ENCODE measurements at regions of chr2 and their contacts with region 1.

Region 1: GRCh38 chr2:192162392-192163042 is 32.2 kb downstream of the TMEFF2 start:
- DNase-seq: no peak
- H3K4me3 ChIP-seq: peak overlapping the region in 1 of 8 donors; percentile 32
- H3K27ac ChIP-seq: no peak overlapping the region
- H3K4me1 ChIP-seq: peaks cover 6 to 15% (median 11%) of the 10 kb centered on the region in 6 donors
- H3K27me3 ChIP-seq: no peaks in the 10 kb centered on the region
- CTCF ChIP-seq: peak; percentile 60 to 93 (median 85)
- POLR2A ChIP-seq: no peak

Region 2: DNA sequence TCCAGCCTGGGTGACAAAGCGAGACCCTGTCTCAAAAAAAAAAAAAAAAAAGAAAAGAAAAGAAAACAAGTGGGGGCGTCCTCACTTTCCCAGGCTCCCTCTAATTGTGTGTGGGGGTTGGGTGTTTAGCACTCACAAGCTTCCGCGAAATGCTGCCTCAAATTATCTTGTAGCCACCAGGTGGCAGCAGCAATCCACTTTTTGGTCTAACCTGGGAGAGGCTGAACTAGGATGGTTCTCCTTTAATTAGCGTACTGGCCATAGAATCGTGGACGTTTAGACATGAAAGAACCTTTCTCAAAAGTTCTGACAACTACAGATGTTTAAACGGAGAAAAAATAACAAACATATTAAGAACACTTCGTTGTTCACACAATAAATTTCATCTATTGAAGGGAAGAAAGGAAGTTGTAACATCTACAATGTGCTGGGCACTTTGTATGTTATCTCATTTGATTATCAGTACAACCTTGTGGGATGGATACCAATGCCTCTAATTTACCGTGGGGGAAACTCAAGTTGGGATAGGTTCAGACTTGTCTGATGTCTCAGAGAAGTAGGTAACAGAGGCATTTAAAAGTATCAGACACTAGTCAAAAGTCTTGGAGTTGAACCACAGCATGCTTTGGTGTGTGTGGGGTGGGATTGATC is 607.3 kb before region 1 on chr2:
- intact Hi-C with region 1: loop called (anchors 5 kb)
- DNase-seq: peak; percentile 87
- H3K4me3 ChIP-seq: peak overlapping the region in 1 of 8 donors; percentile 15
- H3K27ac ChIP-seq: no peak overlapping the region
- H3K4me1 ChIP-seq: peaks cover 0 to 9% (median 4%) of the 10 kb centered on the region in 6 donors
- H3K27me3 ChIP-seq: no peaks in the 10 kb centered on the region
- CTCF ChIP-seq: peak; percentile 57 to 85 (median 75)
- POLR2A ChIP-seq: no peak

Region 3: GRCh38 chr2:191811807-191812602 is 350.5 kb before region 1 on chr2:
- intact Hi-C with region 1: loop called (anchors 5 kb)
- DNase-seq: no peak
- H3K4me3 ChIP-seq: peak overlapping the region in 1 of 8 donors; percentile 17
- H3K27ac ChIP-seq: no peak overlapping the region
- H3K4me1 ChIP-seq: peaks cover 0 to 6% (median 0%) of the 10 kb centered on the region in 6 donors
- H3K27me3 ChIP-seq: no peaks in the 10 kb centered on the region
- CTCF ChIP-seq: peak; percentile 38 to 78 (median 60)
- POLR2A ChIP-seq: no peak

Region 4: DNA sequence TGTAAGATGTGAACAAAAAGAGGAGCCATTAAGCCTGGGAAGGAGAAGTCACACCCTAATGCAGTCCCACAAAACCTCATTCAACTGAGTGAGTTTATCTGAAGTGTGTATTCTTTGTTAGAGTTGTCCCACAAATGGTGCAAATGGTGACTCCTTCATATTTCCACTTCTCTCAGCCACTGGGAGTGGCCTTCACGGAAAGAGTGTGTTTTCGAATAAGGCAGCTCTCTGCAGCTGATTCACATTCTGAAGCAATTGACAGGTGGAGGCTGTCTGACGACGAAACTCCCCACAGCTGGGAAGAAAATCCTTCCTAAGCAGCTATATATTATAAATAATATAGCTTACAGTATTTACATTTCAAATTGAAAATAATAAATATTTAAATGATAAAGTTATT is 351.1 kb after region 1 on chr2:
- intact Hi-C with region 1: no loop called
- DNase-seq: no peak
- H3K4me3 ChIP-seq: no peak overlapping the region
- H3K27ac ChIP-seq: no peak overlapping the region
- H3K4me1 ChIP-seq: no peaks in the 10 kb centered on the region
- H3K27me3 ChIP-seq: no peaks in the 10 kb centered on the region
- CTCF ChIP-seq: no peak
- POLR2A ChIP-seq: no peak

Measured in spleen (tissue), 13 donors.